ENCODE measurements at regions of chr2 and their contacts with region 1.

Region 1: GRCh38 chr2:46062637-46063412 is 234.4 kb upstream of the EPAS1 start:
- DNase-seq: peak; percentile 79
- H3K4me3 Mint-ChIP-seq: no peak overlapping the region
- H3K27ac Mint-ChIP-seq: no peak overlapping the region
- H3K4me1 Mint-ChIP-seq: peaks cover 28% of the 10 kb centered on the region
- H3K27me3 Mint-ChIP-seq: no peaks in the 10 kb centered on the region

Region 2: GRCh38 chr2:46018773-46019591 is 43.8 kb before region 1 on chr2:
- CTCF ChIA-PET with region 1: interaction called, 18 read pairs
- POLR2A ChIA-PET with region 1: interaction called, 3 read pairs
- DNase-seq: no peak
- H3K4me3 Mint-ChIP-seq: peak overlapping the region; percentile 21
- H3K27ac Mint-ChIP-seq: peak overlapping the region; percentile 91
- H3K4me1 Mint-ChIP-seq: peaks cover 77% of the 10 kb centered on the region
- H3K27me3 Mint-ChIP-seq: no peaks in the 10 kb centered on the region

Region 3: DNA sequence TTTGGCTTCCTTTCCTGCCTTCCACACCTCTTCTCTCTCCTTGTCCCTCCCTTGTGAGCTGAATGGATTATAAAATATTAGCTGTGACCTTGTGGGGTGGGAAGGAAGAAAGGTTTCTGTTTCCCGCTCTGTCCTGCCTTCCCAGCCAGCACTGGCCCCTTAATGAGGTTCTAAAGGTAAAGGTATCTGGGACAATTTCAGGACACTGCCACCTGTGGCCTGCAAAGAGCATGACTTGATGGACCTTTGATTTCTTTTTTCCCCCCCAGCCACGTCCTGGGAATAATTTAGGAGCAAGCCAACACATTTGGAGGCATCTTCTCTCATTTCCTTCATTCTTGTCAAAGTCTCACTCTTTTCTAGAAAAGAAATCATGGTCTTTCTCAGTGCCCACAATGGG is 12.3 kb before region 1 on chr2:
- CTCF ChIA-PET with region 1: interaction called, 19 read pairs
- POLR2A ChIA-PET with region 1: interaction called, 3 read pairs
- DNase-seq: no peak
- H3K4me3 Mint-ChIP-seq: no peak overlapping the region
- H3K27ac Mint-ChIP-seq: peak overlapping the region; percentile 34
- H3K4me1 Mint-ChIP-seq: peaks cover 27% of the 10 kb centered on the region
- H3K27me3 Mint-ChIP-seq: no peaks in the 10 kb centered on the region

Region 4: DNA sequence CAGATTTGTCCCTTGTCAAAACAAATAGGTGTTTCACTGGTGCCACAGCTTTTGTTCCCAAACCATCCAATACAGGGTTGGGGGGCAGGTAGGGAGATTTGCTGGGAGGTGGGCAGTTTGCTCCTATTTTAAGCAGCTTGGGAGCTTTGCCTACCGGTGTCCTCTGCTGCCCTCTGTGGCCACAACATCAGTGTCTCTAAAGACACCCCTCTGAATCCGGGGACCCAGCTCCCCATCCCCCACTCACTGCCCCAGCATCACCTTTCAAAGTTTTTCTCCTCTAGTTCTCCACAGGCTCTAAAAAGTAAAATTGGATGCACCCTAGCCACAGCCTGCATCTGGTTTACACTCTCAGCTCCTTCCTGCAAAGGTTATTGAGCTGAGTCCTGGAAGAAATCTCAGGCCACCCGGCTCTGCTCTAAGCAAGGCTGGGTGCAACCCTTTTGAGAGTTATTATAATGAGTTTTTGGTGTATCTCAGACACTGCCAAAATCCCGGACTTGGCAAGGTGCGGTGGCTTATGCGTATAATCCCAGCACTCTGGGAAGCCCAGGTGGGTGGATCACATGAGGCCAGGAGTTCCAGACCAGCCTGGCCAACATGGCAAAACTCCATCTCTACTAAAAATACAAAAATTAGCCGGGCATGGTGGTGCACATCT is 231.5 kb after region 1 on chr2:
- CTCF ChIA-PET with region 1: interaction called, 24 read pairs
- POLR2A ChIA-PET with region 1: interaction called, 4 read pairs
- DNase-seq: peak; percentile 48
- H3K4me3 Mint-ChIP-seq: no peak overlapping the region
- H3K27ac Mint-ChIP-seq: no peak overlapping the region
- H3K4me1 Mint-ChIP-seq: peaks cover 29% of the 10 kb centered on the region
- H3K27me3 Mint-ChIP-seq: peaks cover 45% of the 10 kb centered on the region

Region 5: GRCh38 chr2:46461011-46461674 is 398.3 kb after region 1 on chr2:
- CTCF ChIA-PET with region 1: interaction called, 14 read pairs
- POLR2A ChIA-PET with region 1: no interaction called
- DNase-seq: peak; percentile 81
- H3K4me3 Mint-ChIP-seq: no peak overlapping the region
- H3K27ac Mint-ChIP-seq: no peak overlapping the region
- H3K4me1 Mint-ChIP-seq: peaks cover 16% of the 10 kb centered on the region
- H3K27me3 Mint-ChIP-seq: no peaks in the 10 kb centered on the region

Measured in activated CD4-positive, alpha-beta memory T cell treated with anti-CD3 and anti-CD28 coated beads, Interleukin-2, amount 10 ng/mL, durations not matched to agents 7 days and 5 days (primary cell).